Endothelial cell of umbilical vein (primary cell): ENCODE measurements at regions of chr7 and their contacts with region 1.

Region 1: GRCh38 chr7:4681886-4682620 is at the start of gene FOXK1:
- DNase-seq: peak; percentile 39
- H3K4me3 ChIP-seq: peak within 1 kb of the TSS; percentile 69 to 76 (median 74)
- H3K27ac ChIP-seq: peak within 1 kb of the TSS; percentile 87
- H3K4me1 ChIP-seq: peaks cover 19% of the 10 kb centered on the region
- H3K27me3 ChIP-seq: no peaks in the 10 kb centered on the region
- CTCF ChIP-seq: no peak
- POLR2A ChIP-seq: peak; percentile 65
- total RNA-seq, gene FOXK1: 47.0 and 52.1 TPM in 2 replicates

Region 2: GRCh38 chr7:3747467-3747866 is 934.6 kb before region 1 on chr7:
- CTCF ChIA-PET with region 1: no interaction called
- POLR2A ChIA-PET with region 1: no interaction called
- dilution Hi-C with region 1: no loop called
- intact Hi-C with region 1: no loop called
- DNase-seq: peak; percentile 13
- H3K4me3 ChIP-seq: no peak overlapping the region
- H3K27ac ChIP-seq: no peak overlapping the region
- H3K4me1 ChIP-seq: no peaks in the 10 kb centered on the region
- H3K27me3 ChIP-seq: no peaks in the 10 kb centered on the region
- CTCF ChIP-seq: no peak
- POLR2A ChIP-seq: no peak

Region 3: DNA sequence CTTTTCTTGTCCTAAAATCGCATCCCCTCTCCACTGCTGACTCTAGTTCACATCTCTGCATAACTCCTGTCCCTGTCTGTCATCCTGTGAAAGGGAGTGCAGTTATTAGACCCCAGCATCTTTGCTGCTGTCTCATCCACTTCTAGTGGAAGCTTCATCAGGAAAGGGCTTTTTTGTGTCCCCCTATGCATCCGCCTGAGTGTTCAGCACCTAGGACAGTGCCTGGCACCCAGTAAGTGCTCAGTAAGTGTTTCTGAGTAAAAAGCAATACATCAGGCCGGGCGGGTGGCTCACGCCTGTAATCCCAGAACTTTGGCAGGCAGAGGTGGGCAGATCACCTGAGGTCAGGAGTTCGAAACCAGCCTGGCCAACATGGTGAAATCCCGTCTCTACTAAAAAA is 211.8 kb before region 1 on chr7:
- CTCF ChIA-PET with region 1: no interaction called
- POLR2A ChIA-PET with region 1: no interaction called
- dilution Hi-C with region 1: no loop called
- intact Hi-C with region 1: no loop called
- DNase-seq: no peak
- H3K4me3 ChIP-seq: no peak overlapping the region
- H3K27ac ChIP-seq: no peak overlapping the region
- H3K4me1 ChIP-seq: no peaks in the 10 kb centered on the region
- H3K27me3 ChIP-seq: no peaks in the 10 kb centered on the region
- CTCF ChIP-seq: no peak
- POLR2A ChIP-seq: no peak

Region 4: GRCh38 chr7:4665661-4666060 is 16.4 kb before region 1 on chr7:
- CTCF ChIA-PET with region 1: no interaction called
- POLR2A ChIA-PET with region 1: no interaction called
- dilution Hi-C with region 1: no loop called
- intact Hi-C with region 1: no loop called
- DNase-seq: peak; percentile 80
- H3K4me3 ChIP-seq: no peak overlapping the region
- H3K27ac ChIP-seq: peak overlapping the region; percentile 47
- H3K4me1 ChIP-seq: peaks cover 2% of the 10 kb centered on the region
- H3K27me3 ChIP-seq: no peaks in the 10 kb centered on the region
- CTCF ChIP-seq: no peak
- POLR2A ChIP-seq: no peak

Region 5: DNA sequence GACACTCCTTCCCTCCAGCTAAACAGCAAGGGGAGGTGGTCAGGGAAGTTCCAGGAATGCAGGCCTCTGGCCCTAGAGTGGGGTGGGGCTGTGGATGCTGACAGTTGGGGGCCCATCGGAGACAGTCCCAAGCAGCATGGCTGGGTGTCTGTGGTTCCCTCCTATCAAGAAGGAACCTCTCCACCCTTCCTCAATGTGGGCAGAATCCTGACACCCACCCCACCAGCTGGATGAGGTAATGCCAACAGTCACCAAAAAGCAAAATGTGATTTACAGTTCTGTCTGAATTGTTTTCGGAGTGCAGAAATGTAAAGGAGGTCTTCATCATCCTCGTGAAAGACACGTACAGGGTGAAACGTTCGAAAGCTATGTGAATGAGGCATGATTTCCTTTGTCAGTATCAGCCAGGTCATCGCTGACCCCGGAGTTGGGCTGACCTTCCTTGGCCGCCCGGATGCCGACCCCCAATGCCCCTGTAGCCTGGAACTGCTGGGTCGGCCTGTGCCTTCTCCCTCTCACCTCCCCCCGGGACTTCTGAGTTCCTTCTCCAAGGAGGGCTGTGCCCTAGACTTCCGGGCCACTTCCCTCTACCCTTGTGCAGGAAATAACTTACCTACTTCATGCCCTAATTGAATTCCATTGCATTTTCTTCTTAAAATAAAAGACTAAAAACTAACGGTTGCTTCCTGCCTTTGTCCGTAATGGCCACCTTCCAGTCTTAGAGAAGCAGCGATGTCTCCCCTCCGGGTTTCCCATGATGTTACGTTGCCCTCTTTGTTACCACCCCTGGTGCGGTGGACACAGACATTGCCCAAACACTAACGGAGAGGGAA is 24.5 kb after region 1 on chr7:
- CTCF ChIA-PET with region 1: no interaction called
- POLR2A ChIA-PET with region 1: interaction called, 6 read pairs
- dilution Hi-C with region 1: no loop called
- intact Hi-C with region 1: loop called (anchors 1 kb)
- DNase-seq: peak; percentile 79
- H3K4me3 ChIP-seq: peak overlapping the region in 2 of 3 experiments; percentile 3 to 31
- H3K27ac ChIP-seq: peak overlapping the region; percentile 98
- H3K4me1 ChIP-seq: peaks cover 38% of the 10 kb centered on the region
- H3K27me3 ChIP-seq: no peaks in the 10 kb centered on the region
- CTCF ChIP-seq: no peak
- POLR2A ChIP-seq: no peak

Region 6: GRCh38 chr7:4744391-4745264 is 62.6 kb after region 1 on chr7:
- CTCF ChIA-PET with region 1: interaction called, 9 read pairs
- POLR2A ChIA-PET with region 1: interaction called, 3 read pairs
- dilution Hi-C with region 1: no loop called
- intact Hi-C with region 1: loop called (anchors 1 kb)
- DNase-seq: peak; percentile 96
- H3K4me3 ChIP-seq: no peak overlapping the region
- H3K27ac ChIP-seq: peak overlapping the region; percentile 76
- H3K4me1 ChIP-seq: peaks cover 49% of the 10 kb centered on the region
- H3K27me3 ChIP-seq: no peaks in the 10 kb centered on the region
- CTCF ChIP-seq: no peak
- POLR2A ChIP-seq: no peak

Region 7: GRCh38 chr7:4753711-4754432 is 71.8 kb after region 1 on chr7:
- CTCF ChIA-PET with region 1: interaction called, 3 read pairs
- POLR2A ChIA-PET with region 1: no interaction called
- dilution Hi-C with region 1: no loop called
- intact Hi-C with region 1: loop called (anchors 1 kb)
- DNase-seq: peak; percentile 48
- H3K4me3 ChIP-seq: no peak overlapping the region
- H3K27ac ChIP-seq: no peak overlapping the region
- H3K4me1 ChIP-seq: peaks cover 4% of the 10 kb centered on the region
- H3K27me3 ChIP-seq: no peaks in the 10 kb centered on the region
- CTCF ChIP-seq: peak; percentile 87 to 93
- POLR2A ChIP-seq: no peak